ENCODE measurements at regions of chr17 and their contacts with region 1.

Region 1: DNA sequence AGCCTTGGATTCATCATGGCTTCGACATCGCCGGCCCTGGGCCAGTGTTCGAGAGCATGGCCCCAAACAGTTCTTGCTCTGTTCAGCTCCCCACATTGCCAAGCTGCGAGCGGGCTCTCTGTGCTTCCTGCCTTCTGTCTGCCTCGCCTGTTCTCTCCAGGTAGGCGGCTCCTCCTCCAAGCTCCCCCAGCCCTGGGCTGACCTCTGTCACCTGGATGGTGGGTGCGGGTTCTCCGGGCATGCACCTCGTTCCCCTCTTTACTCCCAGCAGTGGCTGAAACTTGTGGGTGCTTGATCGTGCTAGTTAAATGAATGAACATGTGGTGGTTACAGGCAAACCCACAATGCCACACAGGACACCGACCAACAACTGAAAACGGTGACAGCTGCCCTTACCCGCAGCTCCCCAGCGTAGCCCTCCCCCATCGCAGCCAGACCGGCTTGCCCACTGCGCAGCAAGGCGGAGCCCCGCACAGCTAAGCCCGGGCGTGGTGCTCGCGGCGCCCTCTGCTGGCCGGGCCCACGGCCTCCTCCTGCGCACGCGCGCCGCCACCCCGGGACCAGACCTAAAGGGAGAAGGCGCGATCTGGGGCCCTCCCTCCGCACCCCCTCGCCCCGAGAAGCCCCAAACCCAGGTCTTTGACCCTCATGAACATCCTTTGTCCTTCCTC is 23.0 kb upstream of the EIF1 start:
- DNase-seq: peak; percentile 91 to 98 (median 96)
- ATAC-seq: peak; percentile 92
- H3K4me3 ChIP-seq: peak overlapping the region; percentile 39
- H3K27ac ChIP-seq: peak overlapping the region; percentile 81
- H3K4me1 ChIP-seq: peaks cover 40 to 50% of the 10 kb centered on the region in 2 experiments
- H3K27me3 ChIP-seq: no peaks in the 10 kb centered on the region
- CTCF ChIP-seq: peak; percentile 90 to 97 (median 93)
- EP300 ChIP-seq: no peak; the same call in 1 of the 2 replicates
- POLR2A ChIP-seq: peak; percentile 72
- RAD21 ChIP-seq: peak in 1 of 2 experiments; percentile 21; a peak in 2 of 4 replicates

Region 2: GRCh38 chr17:40803617-40804082 is 862.1 kb before region 1 on chr17:
- CTCF ChIA-PET with region 1: interaction called, 24 read pairs
- POLR2A ChIA-PET with region 1: interaction called, 3 read pairs
- in situ Hi-C with region 1: loop called (anchors 5 kb)
- intact Hi-C with region 1: no loop called
- DNase-seq: peak; percentile 85 to 88 (median 86)
- ATAC-seq: peak; percentile 98
- H3K4me3 ChIP-seq: no peak overlapping the region
- H3K27ac ChIP-seq: no peak overlapping the region
- H3K4me1 ChIP-seq: no peaks in the 10 kb centered on the region
- H3K27me3 ChIP-seq: peaks cover 3 to 14% of the 10 kb centered on the region in 2 experiments; a peak in 4 of 5 replicates
- CTCF ChIP-seq: peak; percentile 90 to 93 (median 93)
- EP300 ChIP-seq: no peak
- POLR2A ChIP-seq: no peak
- RAD21 ChIP-seq: peak; percentile 90 to 96

Region 3: DNA sequence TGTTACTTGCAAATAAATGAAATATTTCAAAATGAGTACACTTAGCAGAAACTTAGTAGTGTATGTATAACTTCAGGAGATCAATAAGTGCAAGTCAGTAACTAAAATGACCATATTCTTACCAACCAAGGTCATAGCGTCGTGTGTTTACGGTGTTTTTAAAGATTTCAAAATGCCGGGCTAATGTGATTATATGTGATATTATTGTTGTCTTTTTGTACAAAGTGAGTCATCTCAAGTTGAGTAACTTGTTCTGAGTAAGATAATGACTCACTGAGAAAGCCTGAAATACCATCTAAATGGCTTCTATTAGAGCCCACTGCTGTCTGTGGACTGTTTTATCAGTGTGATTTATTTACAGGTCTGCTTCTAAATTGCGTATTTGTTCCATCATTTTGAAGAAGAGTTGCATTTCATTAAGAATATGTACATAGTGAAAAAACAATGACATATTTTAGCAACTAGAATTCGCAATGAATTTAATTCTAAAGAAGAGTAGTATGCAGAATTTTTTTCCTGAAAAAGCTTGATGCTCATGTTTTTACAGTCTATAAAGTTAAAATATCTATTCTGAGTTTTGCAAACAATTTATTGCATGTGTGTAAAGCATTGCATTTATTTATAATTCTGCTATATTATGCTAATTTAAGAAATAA is 811.4 kb before region 1 on chr17:
- CTCF ChIA-PET with region 1: interaction called, 16 read pairs
- POLR2A ChIA-PET with region 1: no interaction called
- in situ Hi-C with region 1: no loop called
- intact Hi-C with region 1: no loop called
- DNase-seq: peak; percentile 31 to 66 (median 38)
- ATAC-seq: peak; percentile 76
- H3K4me3 ChIP-seq: no peak overlapping the region
- H3K27ac ChIP-seq: peak overlapping the region; percentile 66; the same call in 1 of the 3 replicates
- H3K4me1 ChIP-seq: peaks cover 0 to 19% of the 10 kb centered on the region in 2 experiments; a peak in 3 of 5 replicates
- H3K27me3 ChIP-seq: no peaks in the 10 kb centered on the region
- CTCF ChIP-seq: no peak
- EP300 ChIP-seq: peak; percentile 80
- POLR2A ChIP-seq: no peak
- RAD21 ChIP-seq: no peak

Region 4: DNA sequence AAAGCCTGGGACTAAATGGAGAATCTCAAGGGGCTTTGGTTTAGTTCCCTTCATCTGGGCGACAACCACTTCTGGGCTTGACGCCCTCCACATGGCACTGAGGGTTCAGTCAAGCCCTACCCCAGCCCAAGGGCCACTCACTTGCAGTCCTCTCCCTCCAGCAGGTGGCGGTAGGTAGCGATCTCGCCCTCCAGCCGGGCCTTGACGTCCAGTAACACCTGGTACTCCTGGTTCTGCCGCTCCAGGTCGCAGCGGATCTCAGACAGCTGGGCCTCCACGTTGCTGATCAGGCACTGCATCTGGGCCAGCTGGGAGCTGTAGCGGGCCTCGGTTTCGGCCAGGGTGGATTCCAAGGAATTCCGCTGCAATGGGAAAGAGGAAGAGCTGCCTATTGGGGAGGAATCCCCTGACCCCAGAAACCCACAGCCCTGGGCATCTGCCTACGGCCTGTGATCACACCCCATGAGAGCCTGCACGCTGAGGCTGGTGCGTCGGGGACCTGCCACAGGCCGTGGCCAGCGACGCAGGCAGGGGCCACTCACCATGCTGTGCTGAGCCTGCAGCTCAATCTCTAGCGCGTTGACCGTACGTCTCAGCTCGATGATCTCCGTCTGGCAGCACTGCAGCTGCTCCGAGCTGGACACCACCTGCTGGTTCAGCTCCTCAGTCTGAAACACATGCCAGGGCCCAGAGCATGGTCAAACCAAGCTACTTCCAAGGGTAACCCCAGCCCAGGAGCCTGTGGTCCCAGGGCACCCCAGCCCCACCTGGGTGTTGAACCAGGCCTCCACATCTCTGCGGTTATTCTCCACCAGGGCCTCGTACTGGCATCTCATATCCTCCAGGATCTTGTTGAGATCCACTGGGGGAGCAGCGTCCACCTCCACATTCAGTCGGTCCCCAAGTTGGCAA is 178.6 kb before region 1 on chr17:
- CTCF ChIA-PET with region 1: interaction called, 4 read pairs
- POLR2A ChIA-PET with region 1: interaction called, 3 read pairs
- in situ Hi-C with region 1: no loop called
- intact Hi-C with region 1: loop called (anchors 10 kb)
- DNase-seq: peak; percentile 70 to 86 (median 82)
- ATAC-seq: peak; percentile 94
- H3K4me3 ChIP-seq: no peak overlapping the region
- H3K27ac ChIP-seq: no peak overlapping the region
- H3K4me1 ChIP-seq: peaks cover 9 to 22% of the 10 kb centered on the region in 2 experiments; a peak in 4 of 5 replicates
- H3K27me3 ChIP-seq: peaks cover 7 to 33% of the 10 kb centered on the region in 2 experiments; a peak in 3 of 5 replicates
- CTCF ChIP-seq: peak; percentile 84 to 91 (median 89)
- EP300 ChIP-seq: no peak
- POLR2A ChIP-seq: no peak
- RAD21 ChIP-seq: peak; percentile 67 to 88

Region 5: DNA sequence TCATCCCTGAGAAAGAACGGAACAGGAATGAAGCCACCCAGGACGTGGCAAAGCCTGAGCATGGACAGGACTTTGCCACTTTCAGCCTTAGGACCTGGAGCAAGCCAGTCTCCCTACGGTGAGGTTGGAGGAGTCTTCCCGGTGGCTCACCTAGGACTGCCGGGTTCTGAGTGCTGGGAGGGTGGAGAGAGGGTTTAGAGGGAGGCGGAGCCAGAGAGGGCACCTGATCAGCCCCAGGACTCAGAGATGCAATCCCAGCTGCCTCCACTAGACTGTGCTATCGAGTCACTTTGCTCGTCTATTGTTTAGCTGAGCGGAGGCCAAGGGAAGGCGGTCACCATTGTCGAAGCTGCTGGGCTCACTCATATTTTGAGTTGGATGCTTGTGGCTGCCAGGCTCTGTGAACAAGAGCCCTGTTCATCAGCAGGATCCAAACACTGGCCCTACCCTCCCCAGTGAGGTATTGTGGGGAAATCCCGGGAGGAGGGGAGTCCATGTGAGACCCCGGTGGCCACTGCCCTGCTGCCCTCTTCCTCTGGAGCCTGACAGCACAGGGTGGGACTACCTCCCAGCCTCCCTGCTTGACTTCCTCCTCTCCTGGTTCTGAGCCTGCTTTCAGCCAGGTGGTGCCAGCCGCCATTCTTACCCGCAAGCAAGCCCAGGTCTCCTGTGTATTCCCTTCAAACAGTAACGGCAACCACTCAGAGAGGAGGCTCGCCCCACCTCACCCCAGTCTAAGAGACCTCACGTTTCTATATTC is 86.0 kb before region 1 on chr17:
- CTCF ChIA-PET with region 1: interaction called, 17 read pairs
- POLR2A ChIA-PET with region 1: interaction called, 3 read pairs
- in situ Hi-C with region 1: no loop called
- intact Hi-C with region 1: no loop called
- DNase-seq: peak; percentile 92 to 97 (median 94)
- ATAC-seq: peak; percentile 98
- H3K4me3 ChIP-seq: no peak overlapping the region
- H3K27ac ChIP-seq: no peak overlapping the region
- H3K4me1 ChIP-seq: peaks cover 2 to 9% of the 10 kb centered on the region in 2 experiments; a peak in 3 of 5 replicates
- H3K27me3 ChIP-seq: peaks cover 0 to 25% of the 10 kb centered on the region in 2 experiments; a peak in 2 of 5 replicates
- CTCF ChIP-seq: peak; percentile 92 to 97 (median 92)
- EP300 ChIP-seq: no peak
- POLR2A ChIP-seq: no peak
- RAD21 ChIP-seq: peak; percentile 25 to 68; a peak in 3 of 4 replicates

Region 6: GRCh38 chr17:41678907-41679739 is 13.4 kb after region 1 on chr17:
- CTCF ChIA-PET with region 1: no interaction called
- POLR2A ChIA-PET with region 1: interaction called, 48 read pairs
- in situ Hi-C with region 1: no loop called
- intact Hi-C with region 1: no loop called
- DNase-seq: peak; percentile 69 to 97 (median 78)
- ATAC-seq: peak; percentile 86
- H3K4me3 ChIP-seq: peak overlapping the region; percentile 26
- H3K27ac ChIP-seq: peak overlapping the region; percentile 98
- H3K4me1 ChIP-seq: peaks cover 28 to 47% of the 10 kb centered on the region in 2 experiments
- H3K27me3 ChIP-seq: no peaks in the 10 kb centered on the region
- CTCF ChIP-seq: peak; percentile 50 to 84 (median 62); a peak in 5 of 6 replicates
- EP300 ChIP-seq: peak; percentile 96
- POLR2A ChIP-seq: no peak
- RAD21 ChIP-seq: peak; percentile 45 to 67; a peak in 3 of 4 replicates

Measured in K562 (cell line).